PC-3 (cell line): ENCODE measurements at regions of chr6 and their contacts with region 1.

Region 1: GRCh38 chr6:154370545-154370944 is 13.9 kb upstream of the IPCEF1 start:
- DNase-seq: peak; percentile 47
- ATAC-seq: peak; percentile 76
- H3K4me3 ChIP-seq: no peak overlapping the region
- H3K27ac ChIP-seq: no peak overlapping the region
- H3K4me1 ChIP-seq: no peaks in the 10 kb centered on the region
- H3K27me3 ChIP-seq: no peaks in the 10 kb centered on the region
- CTCF ChIP-seq: peak; percentile 61

Region 2: GRCh38 chr6:154156135-154156896 is 214.2 kb before region 1 on chr6:
- CTCF ChIA-PET with region 1: interaction called, 6 read pairs
- POLR2A ChIA-PET with region 1: no interaction called
- intact Hi-C with region 1: loop called (anchors 1 kb)
- DNase-seq: peak; percentile 33
- ATAC-seq: peak; percentile 43; the same call in 1 of the 2 replicates
- H3K4me3 ChIP-seq: no peak overlapping the region
- H3K27ac ChIP-seq: no peak overlapping the region
- H3K4me1 ChIP-seq: no peaks in the 10 kb centered on the region
- H3K27me3 ChIP-seq: no peaks in the 10 kb centered on the region
- CTCF ChIP-seq: peak; percentile 58

Region 3: DNA sequence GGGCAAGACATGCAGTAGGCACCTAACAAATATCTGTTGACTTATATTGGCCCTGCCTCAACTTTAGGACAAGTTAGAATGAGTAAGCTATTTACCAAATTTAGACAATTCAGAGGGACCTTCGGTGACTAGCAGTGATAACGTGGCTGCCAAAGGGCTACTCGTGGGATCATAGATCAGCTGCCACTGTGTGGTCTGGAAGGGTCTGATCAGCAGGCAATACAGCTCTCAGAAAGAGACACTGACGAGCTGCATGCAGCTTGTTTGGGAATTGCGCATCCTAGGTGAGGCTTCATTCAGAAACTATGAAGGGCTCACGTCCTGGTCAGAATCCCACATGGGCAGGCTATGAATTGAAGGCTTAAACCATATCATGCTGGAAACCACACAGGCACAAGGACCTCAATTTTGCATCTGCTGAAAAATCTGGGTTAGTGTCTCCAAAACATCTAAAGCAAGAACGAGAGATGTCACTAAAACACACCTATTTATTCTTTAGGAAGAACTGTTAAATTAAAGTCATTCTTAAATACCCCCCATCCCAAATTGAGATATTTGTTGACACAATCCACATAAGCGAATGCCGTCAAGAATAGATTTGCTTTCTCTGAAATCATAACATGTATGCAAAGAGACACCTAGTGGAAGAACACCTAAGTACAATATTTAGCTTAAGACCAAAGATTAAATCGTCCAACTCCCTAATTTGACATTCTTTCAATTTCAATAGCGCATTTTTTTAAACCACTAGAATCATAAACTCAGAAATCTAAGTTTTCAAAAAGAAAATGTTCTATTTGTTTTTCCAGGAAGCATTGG is 93.5 kb before region 1 on chr6:
- CTCF ChIA-PET with region 1: interaction called, 10 read pairs
- POLR2A ChIA-PET with region 1: no interaction called
- intact Hi-C with region 1: loop called (anchors 1 kb)
- DNase-seq: peak; percentile 60
- ATAC-seq: peak; percentile 70
- H3K4me3 ChIP-seq: peak overlapping the region; percentile 72
- H3K27ac ChIP-seq: no peak overlapping the region
- H3K4me1 ChIP-seq: no peaks in the 10 kb centered on the region
- H3K27me3 ChIP-seq: no peaks in the 10 kb centered on the region
- CTCF ChIP-seq: peak; percentile 68

Region 4: GRCh38 chr6:154292890-154293398 is 77.6 kb before region 1 on chr6:
- CTCF ChIA-PET with region 1: no interaction called
- POLR2A ChIA-PET with region 1: no interaction called
- intact Hi-C with region 1: loop called (anchors 1 kb)
- DNase-seq: peak; percentile 88
- ATAC-seq: peak; percentile 84
- H3K4me3 ChIP-seq: peak overlapping the region; percentile 47
- H3K27ac ChIP-seq: peak overlapping the region; percentile 91
- H3K4me1 ChIP-seq: peaks cover 42% of the 10 kb centered on the region
- H3K27me3 ChIP-seq: no peaks in the 10 kb centered on the region
- CTCF ChIP-seq: no peak

Region 5: DNA sequence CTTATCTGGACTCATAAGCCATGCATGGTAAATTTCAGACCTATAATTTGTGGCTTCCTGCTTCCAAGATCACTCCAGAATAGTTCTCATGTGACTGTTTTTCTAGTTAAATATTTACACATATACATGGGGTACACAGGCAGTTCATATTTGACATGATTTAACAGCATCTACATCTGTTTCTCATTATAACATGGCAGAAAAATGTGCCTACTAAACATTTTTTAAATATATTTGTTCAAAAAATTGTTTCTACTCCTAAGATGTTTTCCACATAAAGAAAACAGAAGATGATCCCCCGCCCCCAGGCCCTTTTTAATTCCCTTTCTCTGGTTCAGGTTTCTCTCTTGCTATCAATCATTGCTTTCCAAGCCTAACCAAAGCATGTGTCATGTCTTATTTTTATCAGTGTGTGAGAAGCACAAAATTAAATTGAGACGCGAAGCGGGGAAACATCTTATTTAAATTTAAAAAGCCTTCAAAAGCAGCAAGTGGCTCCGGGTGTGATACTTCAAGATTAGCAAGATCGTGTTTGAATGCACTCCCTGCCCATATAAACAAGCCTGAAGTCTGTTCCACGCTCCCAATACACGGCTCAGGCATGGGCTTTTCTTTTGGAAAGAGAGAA is 51.2 kb before region 1 on chr6:
- CTCF ChIA-PET with region 1: no interaction called
- POLR2A ChIA-PET with region 1: interaction called, 31 read pairs
- intact Hi-C with region 1: no loop called
- DNase-seq: peak; percentile 36
- ATAC-seq: peak; percentile 52
- H3K4me3 ChIP-seq: no peak overlapping the region
- H3K27ac ChIP-seq: peak overlapping the region; percentile 25
- H3K4me1 ChIP-seq: peaks cover 25% of the 10 kb centered on the region
- H3K27me3 ChIP-seq: no peaks in the 10 kb centered on the region
- CTCF ChIP-seq: no peak

Region 6: DNA sequence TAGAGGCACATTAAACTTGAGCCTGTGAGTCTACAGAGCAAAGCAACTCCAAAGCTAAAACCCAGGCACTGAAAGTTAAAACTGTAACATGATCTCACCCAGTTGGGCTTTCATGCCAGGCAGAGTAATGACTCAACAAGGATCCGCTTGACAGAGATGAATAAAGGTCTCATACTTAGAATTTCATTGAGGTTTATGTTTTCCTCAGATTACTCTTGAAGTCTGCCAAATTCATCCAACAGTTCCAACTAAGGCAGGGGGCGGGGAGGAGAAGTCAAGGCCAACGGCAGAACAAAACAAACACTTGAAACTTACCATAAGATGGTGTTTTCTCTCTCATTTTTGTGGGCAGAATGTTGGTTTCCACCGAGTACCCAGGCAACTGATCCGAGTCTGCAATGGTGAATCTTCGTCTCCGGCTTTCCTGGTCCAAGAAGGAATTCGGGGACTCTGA is 40.1 kb after region 1 on chr6:
- CTCF ChIA-PET with region 1: no interaction called
- POLR2A ChIA-PET with region 1: no interaction called
- intact Hi-C with region 1: loop called (anchors 1 kb)
- DNase-seq: peak; percentile 90
- ATAC-seq: peak; percentile 91
- H3K4me3 ChIP-seq: peak overlapping the region; percentile 47; the same call in 1 of the 2 replicates
- H3K27ac ChIP-seq: peak overlapping the region; percentile 81
- H3K4me1 ChIP-seq: peaks cover 20% of the 10 kb centered on the region
- H3K27me3 ChIP-seq: no peaks in the 10 kb centered on the region
- CTCF ChIP-seq: no peak

Region 7: DNA sequence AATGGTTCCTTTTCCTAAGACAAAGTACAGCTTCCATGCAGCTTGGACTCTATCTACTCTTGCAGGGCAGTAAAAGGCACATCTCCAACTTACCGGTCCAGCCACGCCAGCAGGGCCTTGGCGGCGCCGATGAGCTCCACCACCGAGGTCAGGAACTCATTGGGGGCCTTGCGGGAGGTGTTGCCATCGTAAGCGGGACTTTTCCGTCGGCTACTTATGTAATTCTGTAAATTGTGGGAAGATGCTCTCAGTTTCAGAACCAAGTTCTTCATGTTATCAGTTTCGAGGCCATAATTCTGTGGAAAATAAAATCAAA is 71.4 kb after region 1 on chr6:
- CTCF ChIA-PET with region 1: no interaction called
- POLR2A ChIA-PET with region 1: no interaction called
- intact Hi-C with region 1: no loop called
- DNase-seq: no peak
- ATAC-seq: no peak
- H3K4me3 ChIP-seq: no peak overlapping the region
- H3K27ac ChIP-seq: no peak overlapping the region
- H3K4me1 ChIP-seq: no peaks in the 10 kb centered on the region
- H3K27me3 ChIP-seq: no peaks in the 10 kb centered on the region
- CTCF ChIP-seq: no peak

Region 8: GRCh38 chr6:154457881-154458284 is 87.3 kb after region 1 on chr6:
- CTCF ChIA-PET with region 1: no interaction called
- POLR2A ChIA-PET with region 1: no interaction called
- intact Hi-C with region 1: loop called (anchors 5 kb)
- DNase-seq: peak; percentile 64
- ATAC-seq: peak; percentile 97
- H3K4me3 ChIP-seq: no peak overlapping the region
- H3K27ac ChIP-seq: no peak overlapping the region
- H3K4me1 ChIP-seq: peaks cover 17% of the 10 kb centered on the region
- H3K27me3 ChIP-seq: no peaks in the 10 kb centered on the region
- CTCF ChIP-seq: peak; percentile 52